CD14-positive monocyte (primary cell): ENCODE measurements at regions of chr11 and their contacts with region 1.

Region 1: DNA sequence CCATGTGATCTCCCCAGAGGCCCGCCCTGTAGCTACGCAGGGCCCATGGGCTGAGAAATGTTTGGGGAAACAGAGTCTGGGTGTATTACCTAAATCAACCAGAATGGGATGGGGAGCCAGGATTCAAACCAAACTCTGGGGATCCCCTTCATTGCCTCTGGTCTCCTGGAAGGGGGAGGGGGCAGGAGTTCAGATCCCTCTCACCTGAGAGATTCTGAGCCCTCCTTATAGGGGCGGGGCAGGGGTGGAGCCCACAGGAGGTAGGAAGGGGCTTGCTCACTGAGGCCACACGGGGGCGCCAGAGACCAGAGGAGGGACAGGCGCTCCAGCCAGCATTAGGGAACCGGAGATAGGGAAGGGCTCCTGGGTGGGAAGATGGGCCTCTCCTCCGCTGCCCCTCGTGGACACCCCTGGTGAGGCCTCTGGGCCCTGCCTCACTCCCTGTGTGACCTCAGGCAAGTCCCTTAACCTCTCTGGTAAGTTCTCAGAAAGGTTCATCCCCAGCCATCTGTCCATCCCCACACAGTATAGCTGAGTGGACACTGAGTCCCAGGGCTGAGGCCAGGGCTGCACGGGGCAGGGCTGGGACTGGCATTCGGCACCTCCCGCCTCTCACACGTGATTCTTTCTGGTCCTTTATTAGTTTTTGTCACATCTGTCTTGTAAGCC is 2.7 kb upstream of the CDC42BPG start:
- DNase-seq: peak; percentile 89 to 94 (median 91)
- H3K4me3 ChIP-seq: no peak overlapping the region
- H3K4me3 Mint-ChIP-seq: no peak overlapping the region
- H3K27ac ChIP-seq: no peak overlapping the region
- H3K27ac Mint-ChIP-seq: peak overlapping the region in 3 of 7 donors; percentile 16 to 33 (median 30)
- H3K4me1 ChIP-seq: peaks cover 35 to 59% of the 10 kb centered on the region in 2 donors
- H3K4me1 Mint-ChIP-seq: peaks cover 52% of the 10 kb centered on the region
- H3K27me3 ChIP-seq: peaks cover 0 to 10% of the 10 kb centered on the region in 2 donors
- H3K27me3 Mint-ChIP-seq: peaks cover 3 to 21% (median 20%) of the 10 kb centered on the region in 3 donors
- CTCF ChIP-seq: peak; percentile 97

Region 2: DNA sequence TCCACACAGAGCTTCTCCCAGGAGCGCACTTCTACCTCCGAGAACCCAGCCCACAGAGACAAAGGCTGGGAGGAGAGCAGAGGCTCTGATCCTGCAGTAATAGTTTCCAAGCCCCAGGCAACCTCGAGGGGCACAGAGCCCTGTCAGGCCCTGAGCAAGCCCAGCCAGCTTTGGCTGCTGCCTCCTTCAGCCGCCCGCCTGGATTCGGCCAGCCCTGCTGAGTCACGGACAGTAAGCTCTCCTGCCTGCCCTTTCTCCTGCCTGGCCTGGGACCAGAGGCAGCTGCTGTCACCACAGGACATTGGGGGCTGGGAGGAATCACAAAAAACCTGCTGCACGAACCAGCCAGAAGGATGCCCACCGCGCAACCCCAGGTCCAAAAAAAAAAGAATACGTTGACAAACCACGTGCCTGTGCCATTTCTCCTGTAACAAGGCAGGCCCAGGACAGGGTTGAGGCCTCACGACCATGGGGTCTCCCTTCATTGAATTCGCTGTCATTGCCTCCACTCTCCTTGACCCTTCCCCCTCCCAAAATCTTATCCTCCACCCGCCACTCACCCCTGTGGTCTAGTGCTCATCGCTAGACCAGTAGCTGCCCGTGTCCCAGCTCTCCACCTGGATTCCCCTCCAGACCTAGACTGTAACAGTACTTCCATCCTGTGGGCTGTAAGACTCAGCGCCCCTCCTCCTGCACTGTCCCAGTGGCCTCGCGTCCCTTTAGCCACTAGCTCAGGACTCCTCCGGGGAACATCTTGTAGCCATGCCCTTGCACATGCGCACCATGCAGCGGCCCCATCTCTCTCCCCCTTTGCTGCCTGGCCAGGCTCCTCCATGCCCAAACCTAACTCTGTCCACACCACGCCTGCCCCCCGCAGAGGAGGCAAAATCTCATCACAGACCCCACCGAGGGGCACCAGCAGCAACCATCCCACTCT is 263.6 kb before region 1 on chr11:
- intact Hi-C with region 1: no loop called
- DNase-seq: no peak
- H3K4me3 ChIP-seq: no peak overlapping the region
- H3K4me3 Mint-ChIP-seq: no peak overlapping the region
- H3K27ac ChIP-seq: no peak overlapping the region
- H3K27ac Mint-ChIP-seq: no peak overlapping the region
- H3K4me1 ChIP-seq: no peaks in the 10 kb centered on the region
- H3K4me1 Mint-ChIP-seq: peaks cover 2% of the 10 kb centered on the region
- H3K27me3 ChIP-seq: no peaks in the 10 kb centered on the region
- H3K27me3 Mint-ChIP-seq: peaks cover 0 to 5% (median 3%) of the 10 kb centered on the region in 3 donors
- CTCF ChIP-seq: no peak

Region 3: GRCh38 chr11:64787526-64788320 is 59.4 kb before region 1 on chr11:
- intact Hi-C with region 1: loop called in 1 of 2 experiments (anchors 10 kb)
- DNase-seq: peak; percentile 46 to 60 (median 54)
- H3K4me3 ChIP-seq: no peak overlapping the region
- H3K4me3 Mint-ChIP-seq: no peak overlapping the region
- H3K27ac ChIP-seq: no peak overlapping the region
- H3K27ac Mint-ChIP-seq: peak overlapping the region in 3 of 7 donors; percentile 46 to 53 (median 50)
- H3K4me1 ChIP-seq: no peaks in the 10 kb centered on the region
- H3K4me1 Mint-ChIP-seq: no peaks in the 10 kb centered on the region
- H3K27me3 ChIP-seq: no peaks in the 10 kb centered on the region
- H3K27me3 Mint-ChIP-seq: no peaks in the 10 kb centered on the region
- CTCF ChIP-seq: peak; percentile 82

Region 4: GRCh38 chr11:64894070-64894796 is 47.1 kb after region 1 on chr11:
- intact Hi-C with region 1: loop called (anchors 1 kb)
- DNase-seq: peak; percentile 75 to 82 (median 80)
- H3K4me3 ChIP-seq: no peak overlapping the region
- H3K4me3 Mint-ChIP-seq: no peak overlapping the region
- H3K27ac ChIP-seq: no peak overlapping the region
- H3K27ac Mint-ChIP-seq: peak overlapping the region in 1 of 7 donors; percentile 2
- H3K4me1 ChIP-seq: peaks cover 9 to 13% of the 10 kb centered on the region in 2 donors
- H3K4me1 Mint-ChIP-seq: peaks cover 5% of the 10 kb centered on the region
- H3K27me3 ChIP-seq: no peaks in the 10 kb centered on the region
- H3K27me3 Mint-ChIP-seq: peaks cover 2 to 5% (median 5%) of the 10 kb centered on the region in 3 donors
- CTCF ChIP-seq: peak; percentile 94

Region 5: GRCh38 chr11:65314501-65315203 is 467.5 kb after region 1 on chr11 and contains the start of gene CDC42EP2:
- intact Hi-C with region 1: no loop called
- DNase-seq: peak; percentile 63 to 76 (median 74)
- H3K4me3 ChIP-seq: peak within 1 kb of the TSS; percentile 82 to 98 (median 97)
- H3K4me3 Mint-ChIP-seq: peak within 1 kb of the TSS; percentile 86 to 92
- H3K27ac ChIP-seq: peak within 1 kb of the TSS; percentile 40 to 72
- H3K27ac Mint-ChIP-seq: peak within 1 kb of the TSS in 6 of 7 donors; percentile 53 to 89 (median 72)
- H3K4me1 ChIP-seq: peaks cover 37 to 71% of the 10 kb centered on the region in 2 donors
- H3K4me1 Mint-ChIP-seq: peaks cover 50% of the 10 kb centered on the region
- H3K27me3 ChIP-seq: peaks cover 2 to 11% of the 10 kb centered on the region in 2 donors
- H3K27me3 Mint-ChIP-seq: peaks cover 14 to 33% (median 26%) of the 10 kb centered on the region in 3 donors
- CTCF ChIP-seq: no peak
- polyA plus RNA-seq, gene CDC42EP2: 5.4 to 15.6 (median 10.1) TPM